ENCODE measurements at regions of chr5 and their contacts with region 1.

Region 1: DNA sequence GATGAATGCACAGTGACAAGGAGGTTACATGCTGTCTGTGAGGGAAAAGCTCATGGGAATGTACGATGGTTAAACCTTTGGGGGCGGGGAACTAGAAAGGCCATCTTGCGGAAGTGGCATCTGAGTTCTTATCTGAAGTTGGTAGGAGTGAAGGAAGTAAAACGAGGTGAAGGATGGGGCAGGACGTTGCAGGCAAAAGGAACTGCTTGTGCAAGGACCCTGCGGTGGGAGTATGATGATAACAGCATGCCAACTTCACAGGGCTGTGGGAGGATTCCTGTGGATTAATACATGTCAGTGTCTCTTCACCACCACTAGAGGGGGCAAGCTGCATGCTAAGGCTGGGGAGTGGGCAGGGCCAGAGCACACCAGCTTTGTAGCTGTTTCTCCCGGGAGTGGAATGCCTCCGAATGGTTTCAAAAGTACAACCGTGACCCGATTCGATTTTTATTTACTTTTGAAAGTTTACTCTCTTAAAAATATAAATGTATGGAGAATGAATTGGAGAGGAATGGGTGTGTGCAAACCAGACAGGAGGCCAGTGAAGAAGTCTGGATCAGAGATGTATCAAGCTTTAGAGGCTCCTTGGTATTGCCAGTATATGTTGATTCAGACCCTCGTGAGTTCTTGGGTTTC is 62.5 kb downstream of the CYFIP2 start:
- DNase-seq: peak; percentile 90
- H3K4me3 Mint-ChIP-seq: no peak overlapping the region
- H3K27ac Mint-ChIP-seq: no peak overlapping the region
- H3K4me1 Mint-ChIP-seq: no peaks in the 10 kb centered on the region
- H3K27me3 Mint-ChIP-seq: no peaks in the 10 kb centered on the region
- CTCF ChIP-seq: peak; percentile 97

Region 2: GRCh38 chr5:157167214-157167621 is 161.2 kb before region 1 on chr5:
- CTCF ChIA-PET with region 1: interaction called, 10 read pairs
- POLR2A ChIA-PET with region 1: no interaction called
- intact Hi-C with region 1: no loop called
- DNase-seq: no peak
- H3K4me3 Mint-ChIP-seq: no peak overlapping the region
- H3K27ac Mint-ChIP-seq: no peak overlapping the region
- H3K4me1 Mint-ChIP-seq: no peaks in the 10 kb centered on the region
- H3K27me3 Mint-ChIP-seq: peaks cover 15% of the 10 kb centered on the region
- CTCF ChIP-seq: no peak

Region 3: DNA sequence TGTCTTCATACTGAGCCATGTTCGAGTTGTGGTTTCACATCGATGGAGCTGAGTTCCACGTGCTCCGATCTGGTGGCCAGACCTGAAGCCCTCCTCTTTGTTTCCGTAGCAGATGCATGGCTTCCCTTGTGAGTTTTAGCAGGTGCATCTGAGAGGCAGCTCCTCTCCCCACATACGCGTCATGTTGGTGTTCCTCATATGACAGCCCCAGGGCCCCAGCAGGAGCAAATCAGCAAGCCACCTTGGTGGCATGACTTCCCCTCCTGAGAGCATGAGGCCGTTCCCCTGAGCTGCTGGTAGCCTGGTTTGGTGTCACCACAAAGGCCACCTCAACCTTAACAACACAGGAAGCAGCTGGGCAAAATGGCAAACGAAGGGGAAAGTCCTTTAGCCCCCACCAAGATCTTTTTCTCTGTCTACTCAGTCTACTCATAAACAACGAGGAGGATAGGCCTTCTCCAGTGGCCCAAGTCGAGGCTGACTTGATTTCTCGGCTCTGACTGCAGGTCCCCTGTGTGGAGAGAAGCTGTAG is 56.6 kb before region 1 on chr5:
- CTCF ChIA-PET with region 1: interaction called, 10 read pairs
- POLR2A ChIA-PET with region 1: no interaction called
- intact Hi-C with region 1: no loop called
- DNase-seq: no peak
- H3K4me3 Mint-ChIP-seq: no peak overlapping the region
- H3K27ac Mint-ChIP-seq: no peak overlapping the region
- H3K4me1 Mint-ChIP-seq: peaks cover 25% of the 10 kb centered on the region
- H3K27me3 Mint-ChIP-seq: no peaks in the 10 kb centered on the region
- CTCF ChIP-seq: no peak

Region 4: DNA sequence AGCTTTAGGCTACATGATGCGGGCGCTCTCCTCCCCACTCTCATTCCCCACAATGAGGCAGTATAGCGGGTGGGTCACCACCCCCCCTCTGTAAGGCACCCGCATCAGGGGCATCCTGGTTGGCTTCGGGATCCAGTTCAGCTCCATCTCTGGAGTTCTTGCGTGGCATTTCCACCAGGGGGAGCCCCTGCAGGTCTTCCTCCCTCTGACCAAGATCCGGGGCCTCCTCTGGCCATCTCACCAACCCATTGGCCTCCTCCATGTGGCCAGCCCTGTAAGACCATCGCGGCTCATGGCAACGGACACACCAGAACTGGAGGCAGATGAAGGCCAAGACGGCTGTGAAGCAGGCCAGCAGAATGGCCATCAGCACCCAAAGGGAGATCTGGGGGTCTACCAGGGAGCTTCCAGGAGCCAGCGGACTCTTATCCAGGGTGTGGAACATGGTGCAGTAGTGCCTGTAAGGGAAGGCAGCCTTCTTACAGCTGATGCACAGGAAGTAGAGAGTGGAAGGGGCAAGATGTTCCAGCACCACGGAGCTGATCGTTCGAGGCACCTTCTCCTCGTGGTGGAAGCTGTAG is 14.5 kb after region 1 on chr5:
- CTCF ChIA-PET with region 1: interaction called, 84 read pairs
- POLR2A ChIA-PET with region 1: no interaction called
- intact Hi-C with region 1: no loop called
- DNase-seq: peak; percentile 66
- H3K4me3 Mint-ChIP-seq: no peak overlapping the region
- H3K27ac Mint-ChIP-seq: no peak overlapping the region
- H3K4me1 Mint-ChIP-seq: no peaks in the 10 kb centered on the region
- H3K27me3 Mint-ChIP-seq: no peaks in the 10 kb centered on the region
- CTCF ChIP-seq: peak; percentile 82

Region 5: DNA sequence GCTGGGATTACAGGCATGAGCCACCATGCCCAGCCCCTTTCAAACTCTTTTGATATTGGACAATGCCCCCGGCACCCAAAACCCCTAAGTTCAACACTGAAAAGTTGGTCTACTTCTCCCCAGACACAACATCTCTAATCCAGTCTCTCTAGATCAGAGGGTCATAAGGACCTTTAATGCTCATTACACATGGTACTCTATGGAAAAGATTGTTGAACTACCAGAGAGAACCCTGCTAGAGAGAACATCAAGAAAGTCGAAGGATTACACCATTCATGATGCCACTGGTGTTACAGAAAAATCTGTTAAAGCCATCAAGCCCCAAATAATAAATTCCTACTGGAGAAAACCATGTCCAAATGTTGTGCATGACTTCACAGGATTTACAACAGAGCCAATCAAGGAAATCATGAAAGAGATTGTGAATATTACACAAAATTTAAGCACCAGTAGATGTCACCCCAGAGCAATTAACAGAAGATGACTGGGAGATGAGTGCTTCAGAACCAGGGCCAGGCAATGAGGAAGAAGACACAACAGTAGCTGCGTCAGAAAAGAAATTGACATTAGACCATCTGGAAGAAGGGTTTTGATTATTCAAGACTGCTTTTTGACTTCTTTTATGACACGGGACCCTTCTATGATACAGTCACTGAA is 103.3 kb after region 1 on chr5:
- CTCF ChIA-PET with region 1: interaction called, 27 read pairs
- POLR2A ChIA-PET with region 1: no interaction called
- intact Hi-C with region 1: loop called (anchors 1 kb)
- DNase-seq: peak; percentile 82
- H3K4me3 Mint-ChIP-seq: no peak overlapping the region
- H3K27ac Mint-ChIP-seq: no peak overlapping the region
- H3K4me1 Mint-ChIP-seq: no peaks in the 10 kb centered on the region
- H3K27me3 Mint-ChIP-seq: no peaks in the 10 kb centered on the region
- CTCF ChIP-seq: peak; percentile 69

Region 6: DNA sequence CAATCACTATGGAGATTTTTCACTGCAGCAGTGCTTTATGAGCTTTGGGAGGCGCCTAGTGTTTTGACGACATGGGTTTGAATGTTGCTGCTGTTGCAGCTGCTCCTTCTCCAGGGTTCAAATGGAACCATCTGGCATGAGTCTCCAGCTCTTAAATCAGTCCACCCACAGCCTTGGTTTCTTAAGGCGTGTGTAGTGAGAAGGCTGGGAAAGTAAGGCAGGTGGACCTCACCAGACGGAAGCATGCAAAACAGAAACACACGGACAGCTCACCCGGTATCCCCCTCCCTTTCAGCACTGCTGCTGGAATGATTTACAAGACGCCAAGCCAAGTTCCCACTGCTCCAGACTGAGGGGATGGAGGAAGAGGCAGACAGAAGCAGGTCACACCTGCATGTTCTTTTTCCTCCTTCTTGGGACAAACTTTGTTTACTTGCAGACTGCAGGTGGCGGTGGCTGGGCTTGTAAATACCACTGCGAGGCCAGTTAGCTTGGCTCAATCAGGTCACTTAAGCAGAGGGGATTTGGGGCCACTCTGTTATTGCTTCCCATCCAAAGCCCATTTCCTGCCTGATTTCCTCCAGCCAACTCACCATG is 199.7 kb after region 1 on chr5:
- CTCF ChIA-PET with region 1: no interaction called
- POLR2A ChIA-PET with region 1: no interaction called
- intact Hi-C with region 1: no loop called
- DNase-seq: no peak
- H3K4me3 Mint-ChIP-seq: no peak overlapping the region
- H3K27ac Mint-ChIP-seq: no peak overlapping the region
- H3K4me1 Mint-ChIP-seq: no peaks in the 10 kb centered on the region
- H3K27me3 Mint-ChIP-seq: no peaks in the 10 kb centered on the region
- CTCF ChIP-seq: no peak

Region 7: GRCh38 chr5:157665467-157666100 is 337.2 kb after region 1 on chr5:
- CTCF ChIA-PET with region 1: interaction called, 4 read pairs
- POLR2A ChIA-PET with region 1: no interaction called
- intact Hi-C with region 1: loop called (anchors 1 kb)
- DNase-seq: peak; percentile 89
- H3K4me3 Mint-ChIP-seq: no peak overlapping the region
- H3K27ac Mint-ChIP-seq: no peak overlapping the region
- H3K4me1 Mint-ChIP-seq: peaks cover 10% of the 10 kb centered on the region
- H3K27me3 Mint-ChIP-seq: peaks cover 10% of the 10 kb centered on the region
- CTCF ChIP-seq: no peak

Region 8: DNA sequence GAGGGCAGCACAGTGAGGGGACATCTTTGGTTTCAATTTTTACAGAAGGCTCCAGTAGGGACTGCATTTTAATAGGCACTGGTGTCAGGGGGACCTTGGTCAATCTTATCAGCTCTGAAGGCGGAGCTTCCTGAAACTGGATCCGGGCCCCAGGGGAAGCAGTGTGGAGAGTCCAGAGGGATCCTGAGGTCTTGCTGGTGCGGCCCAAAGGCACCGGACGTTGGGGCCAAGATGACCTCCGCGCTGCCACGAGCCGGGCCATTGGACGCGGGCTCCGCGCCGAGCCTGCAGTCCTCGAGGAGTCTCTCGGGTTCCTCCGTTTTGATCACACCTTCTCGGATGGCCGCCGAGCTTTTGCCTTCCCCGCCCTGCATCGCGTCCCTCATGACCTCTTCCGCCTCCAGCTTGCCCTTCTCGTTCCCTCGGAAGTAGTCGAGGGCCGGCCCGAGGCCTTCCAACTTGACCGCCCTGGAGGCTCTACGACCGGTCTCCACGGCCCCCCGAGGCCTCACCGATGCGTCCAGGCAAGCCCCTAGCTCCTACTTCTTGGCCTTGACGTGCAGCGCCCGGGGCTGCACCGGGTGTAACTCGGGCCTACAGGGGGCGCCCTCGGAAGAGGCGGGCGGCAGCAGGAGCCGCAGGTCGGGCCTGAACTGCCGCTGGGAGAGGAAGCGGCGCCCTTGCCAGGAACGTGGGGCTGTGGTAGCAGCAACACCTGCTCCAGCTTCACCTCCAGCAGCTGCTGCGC is 361.7 kb after region 1 on chr5:
- CTCF ChIA-PET with region 1: no interaction called
- POLR2A ChIA-PET with region 1: no interaction called
- intact Hi-C with region 1: no loop called
- DNase-seq: no peak
- H3K4me3 Mint-ChIP-seq: no peak overlapping the region
- H3K27ac Mint-ChIP-seq: no peak overlapping the region
- H3K4me1 Mint-ChIP-seq: no peaks in the 10 kb centered on the region
- H3K27me3 Mint-ChIP-seq: no peaks in the 10 kb centered on the region
- CTCF ChIP-seq: peak; percentile 20

Region 9: DNA sequence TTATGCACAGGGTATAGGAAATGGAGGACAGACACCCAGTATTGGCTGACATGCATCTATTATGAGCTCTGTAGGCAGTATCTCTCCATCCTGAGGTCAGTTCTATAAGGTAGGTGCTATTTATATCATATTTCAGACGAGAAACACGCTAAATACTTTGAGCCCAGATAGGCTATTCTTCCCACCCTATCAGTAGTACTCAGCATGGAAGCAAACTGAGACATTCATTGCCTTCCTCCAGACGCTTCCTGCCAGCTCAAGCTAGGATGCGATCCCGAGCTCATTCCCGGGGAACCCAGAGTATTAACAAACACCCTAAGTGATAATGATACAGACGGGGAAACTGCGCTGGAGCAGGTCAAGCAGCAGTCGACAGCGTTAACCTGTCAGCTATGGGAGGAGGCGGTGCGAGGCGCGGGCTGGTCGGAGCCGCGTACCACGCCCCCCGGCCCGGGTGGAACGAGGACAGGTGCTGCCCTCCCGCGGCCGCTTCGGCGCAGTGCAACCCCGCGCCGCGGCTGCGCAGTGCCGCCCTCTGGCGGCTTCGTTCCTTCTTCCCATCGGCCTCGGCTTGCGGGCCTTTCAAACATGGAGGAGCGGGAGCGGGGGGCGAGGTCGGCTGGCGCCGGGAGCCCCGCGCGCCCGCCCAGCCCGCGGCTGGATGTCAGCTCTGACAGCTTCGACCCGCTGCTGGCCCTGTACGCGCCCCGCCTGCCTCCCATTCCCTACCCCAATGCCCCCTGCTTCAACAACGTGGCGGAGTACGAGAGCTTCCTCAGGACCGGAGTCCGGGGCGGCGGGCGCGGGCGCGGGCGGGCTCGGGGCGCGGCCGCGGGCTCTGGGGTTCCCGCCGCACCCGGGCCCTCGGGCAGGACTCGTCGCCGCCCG is 415.0 kb after region 1 on chr5 and contains the start of gene LSM11:
- CTCF ChIA-PET with region 1: interaction called, 92 read pairs
- POLR2A ChIA-PET with region 1: interaction called, 6 read pairs
- intact Hi-C with region 1: loop called (anchors 1 kb)
- DNase-seq: peak; percentile 90
- H3K4me3 Mint-ChIP-seq: peak within 1 kb of the TSS; percentile 78
- H3K27ac Mint-ChIP-seq: peak within 1 kb of the TSS; percentile 68
- H3K4me1 Mint-ChIP-seq: peaks cover 18% of the 10 kb centered on the region
- H3K27me3 Mint-ChIP-seq: no peaks in the 10 kb centered on the region
- CTCF ChIP-seq: peak; percentile 100
- total RNA-seq, gene LSM11: 3.4 and 4.5 TPM in 2 replicates

Measured in MCF 10A (cell line).